Breast epithelium (tissue), 4 donors: ENCODE measurements at regions of chr3 and their contacts with region 1.

Region 1: GRCh38 chr3:194046995-194047645 is 88.8 kb upstream of the HES1 start:
- DNase-seq: peak in 1 of 2 donors; percentile 62
- H3K4me3 ChIP-seq: no peak overlapping the region
- H3K27ac ChIP-seq: peak overlapping the region in 1 of 2 donors; percentile 44
- H3K4me1 ChIP-seq: no peaks in the 10 kb centered on the region
- H3K27me3 ChIP-seq: no peaks in the 10 kb centered on the region
- CTCF ChIP-seq: no peak
- POLR2A ChIP-seq: no peak

Region 2: DNA sequence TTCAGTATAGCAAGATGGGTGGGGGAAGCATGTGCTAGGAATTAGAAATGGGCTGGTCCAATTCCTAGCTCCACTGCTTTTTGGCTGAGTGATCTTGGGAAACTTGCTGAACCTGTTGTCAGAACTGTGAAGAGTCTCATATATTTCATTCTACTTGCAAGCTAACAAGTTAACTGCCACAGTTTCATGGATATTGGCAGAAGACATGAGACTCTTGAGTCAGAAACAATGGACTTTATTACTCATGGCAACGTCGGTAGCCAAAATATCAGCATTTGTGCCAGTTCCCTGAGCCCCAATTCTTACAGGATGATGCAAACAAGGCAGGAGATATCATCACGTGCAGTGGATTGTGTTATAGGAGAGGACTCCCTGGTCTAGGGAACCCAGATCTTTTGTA is 832.7 kb before region 1 on chr3:
- intact Hi-C with region 1: loop called (anchors 10 kb)
- DNase-seq: no peak
- H3K4me3 ChIP-seq: no peak overlapping the region
- H3K27ac ChIP-seq: no peak overlapping the region
- H3K4me1 ChIP-seq: no peaks in the 10 kb centered on the region
- H3K27me3 ChIP-seq: no peaks in the 10 kb centered on the region
- CTCF ChIP-seq: no peak
- POLR2A ChIP-seq: no peak

Region 3: GRCh38 chr3:194023501-194024280 is 23.4 kb before region 1 on chr3:
- intact Hi-C with region 1: no loop called
- DNase-seq: no peak
- H3K4me3 ChIP-seq: no peak overlapping the region
- H3K27ac ChIP-seq: peak overlapping the region in 1 of 2 donors; percentile 43
- H3K4me1 ChIP-seq: no peaks in the 10 kb centered on the region
- H3K27me3 ChIP-seq: no peaks in the 10 kb centered on the region
- CTCF ChIP-seq: no peak
- POLR2A ChIP-seq: no peak

Region 4: DNA sequence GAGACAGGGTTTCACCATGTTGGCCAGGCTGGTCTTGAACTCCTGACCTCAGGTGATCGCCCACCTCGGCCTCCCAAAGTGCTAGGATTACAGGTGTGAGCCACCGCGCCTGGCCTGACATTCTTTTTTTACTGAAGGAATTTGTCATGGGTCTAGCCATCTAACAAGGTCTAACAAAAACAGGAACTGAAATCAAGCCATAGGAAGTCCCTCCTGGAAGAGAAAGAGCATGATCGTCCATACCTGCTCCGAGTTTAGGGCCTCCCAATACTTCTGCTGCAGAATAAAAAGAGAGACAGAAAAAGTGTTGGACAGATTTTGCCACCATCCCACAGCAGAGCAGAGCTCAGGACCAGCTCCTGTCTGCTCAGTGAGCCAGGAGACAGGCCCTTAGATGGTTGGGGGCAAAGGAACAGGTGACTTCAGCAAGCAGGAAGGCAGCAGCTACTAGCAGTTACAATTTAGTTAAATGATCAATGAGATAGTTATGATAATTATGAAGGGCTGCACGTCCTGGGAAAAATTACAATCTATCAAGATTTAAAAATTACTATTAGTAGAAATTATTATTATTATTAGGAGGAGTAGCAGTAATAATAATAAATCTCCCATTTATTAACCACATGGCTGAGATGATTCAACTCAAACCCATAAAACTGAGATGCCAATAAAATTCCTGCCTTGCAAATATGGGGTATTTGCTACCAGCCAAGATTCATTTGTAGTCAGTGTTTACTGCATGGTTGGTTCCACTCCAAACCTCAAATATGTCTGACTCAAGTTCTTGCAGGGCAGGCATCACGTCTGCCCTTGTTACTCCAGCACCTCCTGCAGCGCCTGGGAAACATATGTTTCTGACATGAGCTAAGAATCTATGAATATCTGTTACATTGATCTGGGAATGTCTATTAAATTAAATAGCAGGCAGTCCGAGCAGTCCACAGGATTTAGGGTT is 546.0 kb after region 1 on chr3:
- intact Hi-C with region 1: no loop called
- DNase-seq: peak in 1 of 2 donors; percentile 79
- H3K4me3 ChIP-seq: no peak overlapping the region
- H3K27ac ChIP-seq: peak overlapping the region in 1 of 2 donors; percentile 67
- H3K4me1 ChIP-seq: peaks cover 0 to 5% of the 10 kb centered on the region in 2 donors
- H3K27me3 ChIP-seq: no peaks in the 10 kb centered on the region
- CTCF ChIP-seq: no peak
- POLR2A ChIP-seq: no peak